ENCODE measurements at regions of chr7 and their contacts with region 1.

Region 1: GRCh38 chr7:100705753-100706671 is at the start of gene POP7:
- DNase-seq: peak; percentile 97 to 98
- ATAC-seq: peak; percentile 98
- H3K4me3 ChIP-seq: peak within 1 kb of the TSS; percentile 92 to 97 (median 96)
- H3K27ac ChIP-seq: peak within 1 kb of the TSS; percentile 92 to 98 (median 93)
- H3K4me1 ChIP-seq: peaks cover 14 to 17% of the 10 kb centered on the region in 2 donors
- H3K27me3 ChIP-seq: no peaks in the 10 kb centered on the region
- CTCF ChIP-seq: no peak
- POLR2A ChIP-seq: peak; percentile 58 to 60
- total RNA-seq, gene POP7: 39.8 to 76.3 (median 63.0) TPM

Region 2: DNA sequence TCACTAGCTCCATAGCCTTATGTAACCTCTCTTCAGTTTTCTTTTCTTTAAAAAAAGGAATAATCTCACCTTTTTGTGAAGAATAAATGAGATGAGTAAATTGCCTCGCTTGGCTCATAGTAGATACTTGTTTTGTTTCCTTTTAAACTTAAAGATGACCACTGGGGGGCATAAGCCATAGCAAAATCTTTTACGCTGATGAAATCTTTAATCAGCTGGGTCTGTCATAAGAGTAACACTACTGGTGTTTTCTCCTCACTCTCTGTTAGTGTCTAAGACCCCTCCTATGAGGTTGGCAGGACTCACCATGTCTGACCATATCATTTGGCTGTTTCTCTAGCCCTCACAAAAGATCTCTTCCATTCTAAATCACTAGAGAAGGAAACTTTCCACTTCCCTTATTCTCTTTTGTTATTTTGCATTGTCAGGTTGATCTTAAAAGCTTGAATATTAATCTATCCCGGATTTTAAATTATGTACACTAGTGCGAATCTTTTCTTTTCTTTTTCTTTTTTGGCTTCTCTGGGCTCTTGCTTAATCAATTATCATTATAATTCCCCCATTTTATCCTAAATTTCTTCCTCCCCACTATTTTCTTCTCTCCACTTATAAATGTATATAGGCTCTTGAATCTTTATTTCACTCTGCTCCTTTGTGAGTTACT is 515.8 kb before region 1 on chr7:
- in situ Hi-C with region 1: no loop called
- intact Hi-C with region 1: no loop called
- DNase-seq: no peak
- ATAC-seq: peak in 1 of 2 donors; percentile 30
- H3K4me3 ChIP-seq: no peak overlapping the region
- H3K27ac ChIP-seq: no peak overlapping the region
- H3K4me1 ChIP-seq: no peaks in the 10 kb centered on the region
- H3K27me3 ChIP-seq: no peaks in the 10 kb centered on the region
- CTCF ChIP-seq: peak in 3 of 5 experiments; percentile 22 to 33 (median 26)
- POLR2A ChIP-seq: no peak

Region 3: GRCh38 chr7:100478966-100479665 is 226.9 kb before region 1 on chr7 and contains the start of gene TSC22D4:
- in situ Hi-C with region 1: loop called in 1 of 4 experiments (anchors 25 kb)
- intact Hi-C with region 1: loop called (anchors 10 kb)
- DNase-seq: peak; percentile 95
- ATAC-seq: peak; percentile 97 to 98
- H3K4me3 ChIP-seq: peak within 1 kb of the TSS; percentile 96 to 100 (median 98)
- H3K27ac ChIP-seq: peak within 1 kb of the TSS; percentile 90 to 99 (median 94)
- H3K4me1 ChIP-seq: peaks cover 33 to 36% of the 10 kb centered on the region in 2 donors
- H3K27me3 ChIP-seq: no peaks in the 10 kb centered on the region
- CTCF ChIP-seq: no peak
- POLR2A ChIP-seq: peak; percentile 79 to 90
- total RNA-seq, gene TSC22D4: 14.3 to 25.5 (median 21.2) TPM

Region 4: DNA sequence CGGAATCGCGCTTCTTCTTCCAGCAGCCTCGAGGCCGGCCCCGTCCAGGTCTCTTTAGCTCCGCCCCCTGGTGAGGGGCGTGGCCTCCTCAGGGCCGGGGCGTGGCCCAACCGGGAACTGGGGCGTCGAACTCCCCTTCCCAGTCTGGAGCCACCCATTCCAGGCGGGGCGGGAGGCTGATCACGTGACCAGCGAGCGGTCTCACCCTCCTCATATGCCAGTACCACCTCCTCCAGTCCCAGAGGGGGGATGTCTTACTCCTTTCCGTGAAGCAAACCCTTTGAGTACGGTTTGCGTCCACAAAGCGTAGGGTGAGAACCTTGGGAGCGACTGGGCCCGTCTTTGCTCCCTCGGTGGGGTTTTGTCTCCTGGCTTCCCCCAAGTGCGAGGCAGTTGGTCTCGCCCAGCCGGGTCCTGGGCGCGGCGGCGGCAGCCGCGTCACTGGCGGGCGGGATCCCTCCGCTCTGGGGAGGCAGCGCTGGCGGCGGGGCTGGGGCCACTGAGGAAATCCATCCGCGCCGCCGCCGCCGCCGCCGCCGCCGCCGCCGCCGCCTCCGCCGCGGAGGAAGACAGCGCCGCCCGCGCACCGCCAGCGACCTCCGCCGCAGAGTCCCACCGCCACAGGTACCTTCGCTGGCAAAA is 32.6 kb before region 1 on chr7 and contains the start of gene GNB2:
- in situ Hi-C with region 1: no loop called
- intact Hi-C with region 1: loop called (anchors 1 kb)
- DNase-seq: peak; percentile 98 to 99
- ATAC-seq: peak; percentile 90
- H3K4me3 ChIP-seq: peak within 1 kb of the TSS; percentile 95 to 100 (median 97)
- H3K27ac ChIP-seq: peak within 1 kb of the TSS; percentile 96 to 100 (median 99)
- H3K4me1 ChIP-seq: peaks cover 0 to 8% of the 10 kb centered on the region in 2 donors
- H3K27me3 ChIP-seq: no peaks in the 10 kb centered on the region
- CTCF ChIP-seq: peak in 2 of 5 experiments; percentile 43 to 53
- POLR2A ChIP-seq: peak; percentile 83 to 87
- total RNA-seq, gene GNB2: 108 to 163 (median 129) TPM

Region 5: DNA sequence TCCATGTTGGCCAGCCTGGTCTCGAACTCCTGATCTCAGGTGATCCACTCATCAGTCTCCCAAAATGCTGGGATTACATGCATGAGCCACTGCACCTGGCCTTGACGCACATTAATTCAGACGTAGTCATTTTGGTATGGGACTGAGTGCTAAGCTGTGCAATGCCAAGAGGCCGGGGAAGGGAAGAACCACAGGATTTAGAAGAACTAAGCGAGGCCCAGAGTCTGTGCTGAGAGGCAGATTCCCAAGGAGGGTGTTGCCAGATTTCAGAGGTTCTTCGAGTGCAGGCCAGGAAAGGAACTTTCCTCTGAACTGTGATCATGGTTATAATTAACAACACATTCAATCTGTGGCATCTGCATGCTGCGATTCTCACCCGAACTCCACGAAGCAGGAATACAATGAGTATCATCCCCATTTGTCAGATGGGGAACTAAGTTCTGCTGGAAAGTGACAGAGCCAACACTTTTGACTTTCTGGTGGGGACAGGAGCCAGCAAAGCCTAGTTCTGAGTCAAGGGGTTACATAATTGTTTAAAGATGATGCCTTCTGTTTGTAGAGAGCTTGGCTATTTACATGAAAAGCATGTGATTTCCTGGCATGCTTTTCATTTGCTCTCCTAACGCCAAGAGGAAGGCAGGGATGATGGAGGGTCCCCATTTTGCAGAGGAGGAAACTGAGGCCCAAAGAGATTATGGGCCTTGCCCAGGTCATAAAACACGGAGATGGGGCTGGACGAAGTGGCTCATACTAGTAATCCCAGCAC is 21.2 kb after region 1 on chr7:
- in situ Hi-C with region 1: no loop called
- intact Hi-C with region 1: loop called (anchors 1 kb)
- DNase-seq: no peak
- ATAC-seq: no peak
- H3K4me3 ChIP-seq: no peak overlapping the region
- H3K27ac ChIP-seq: no peak overlapping the region
- H3K4me1 ChIP-seq: no peaks in the 10 kb centered on the region
- H3K27me3 ChIP-seq: peaks cover 0 to 7% (median 4%) of the 10 kb centered on the region in 3 donors
- CTCF ChIP-seq: no peak
- POLR2A ChIP-seq: no peak

Region 6: DNA sequence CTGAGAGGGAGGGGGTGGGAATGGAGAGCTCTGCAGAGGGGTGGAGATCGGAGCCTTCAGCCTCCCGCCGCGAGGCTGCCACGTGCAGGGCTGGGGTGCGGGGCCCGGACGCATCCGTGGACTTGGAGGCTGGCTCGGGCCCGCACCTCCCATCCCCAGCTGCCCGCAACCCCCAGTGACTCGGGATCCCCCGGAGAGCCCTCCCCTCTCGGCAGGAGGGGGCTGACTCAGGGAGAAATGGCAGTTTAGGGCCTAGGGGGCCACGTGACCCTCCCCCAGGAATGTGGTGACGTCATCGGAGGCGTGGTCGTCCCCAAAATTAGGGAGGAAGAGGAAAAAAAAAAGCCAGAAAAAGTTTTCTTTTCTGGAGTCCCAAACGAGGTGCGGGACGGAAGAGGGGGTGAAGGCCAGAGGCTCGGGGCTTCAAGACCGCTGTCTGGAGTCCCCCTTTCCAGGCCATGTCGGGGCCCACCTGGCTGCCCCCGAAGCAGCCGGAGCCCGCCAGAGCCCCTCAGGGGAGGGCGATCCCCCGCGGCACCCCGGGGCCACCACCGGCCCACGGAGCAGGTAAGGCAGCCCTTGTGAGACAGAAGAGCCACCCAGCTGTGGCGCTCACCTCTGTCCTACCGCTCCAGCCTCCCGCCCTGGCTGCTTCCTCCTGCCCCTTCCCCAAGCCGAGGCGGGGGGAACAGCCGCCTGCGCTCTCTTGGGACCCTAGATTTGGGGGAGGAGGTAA is 161.2 kb after region 1 on chr7 and contains the start of gene TRIP6:
- in situ Hi-C with region 1: loop called in 2 of 4 experiments (anchors 10 to 25 kb)
- intact Hi-C with region 1: no loop called
- DNase-seq: peak; percentile 72 to 76
- ATAC-seq: peak; percentile 63 to 77
- H3K4me3 ChIP-seq: peak within 1 kb of the TSS; percentile 57 to 66 (median 63)
- H3K27ac ChIP-seq: peak within 1 kb of the TSS; percentile 80 to 84 (median 83)
- H3K4me1 ChIP-seq: peaks cover 3 to 18% of the 10 kb centered on the region in 2 donors
- H3K27me3 ChIP-seq: peaks cover 3 to 7% (median 7%) of the 10 kb centered on the region in 3 donors
- CTCF ChIP-seq: no peak
- POLR2A ChIP-seq: peak in 1 of 2 donors; percentile 10
- total RNA-seq, gene TRIP6: 4.6 to 9.1 (median 7.3) TPM

Region 7: DNA sequence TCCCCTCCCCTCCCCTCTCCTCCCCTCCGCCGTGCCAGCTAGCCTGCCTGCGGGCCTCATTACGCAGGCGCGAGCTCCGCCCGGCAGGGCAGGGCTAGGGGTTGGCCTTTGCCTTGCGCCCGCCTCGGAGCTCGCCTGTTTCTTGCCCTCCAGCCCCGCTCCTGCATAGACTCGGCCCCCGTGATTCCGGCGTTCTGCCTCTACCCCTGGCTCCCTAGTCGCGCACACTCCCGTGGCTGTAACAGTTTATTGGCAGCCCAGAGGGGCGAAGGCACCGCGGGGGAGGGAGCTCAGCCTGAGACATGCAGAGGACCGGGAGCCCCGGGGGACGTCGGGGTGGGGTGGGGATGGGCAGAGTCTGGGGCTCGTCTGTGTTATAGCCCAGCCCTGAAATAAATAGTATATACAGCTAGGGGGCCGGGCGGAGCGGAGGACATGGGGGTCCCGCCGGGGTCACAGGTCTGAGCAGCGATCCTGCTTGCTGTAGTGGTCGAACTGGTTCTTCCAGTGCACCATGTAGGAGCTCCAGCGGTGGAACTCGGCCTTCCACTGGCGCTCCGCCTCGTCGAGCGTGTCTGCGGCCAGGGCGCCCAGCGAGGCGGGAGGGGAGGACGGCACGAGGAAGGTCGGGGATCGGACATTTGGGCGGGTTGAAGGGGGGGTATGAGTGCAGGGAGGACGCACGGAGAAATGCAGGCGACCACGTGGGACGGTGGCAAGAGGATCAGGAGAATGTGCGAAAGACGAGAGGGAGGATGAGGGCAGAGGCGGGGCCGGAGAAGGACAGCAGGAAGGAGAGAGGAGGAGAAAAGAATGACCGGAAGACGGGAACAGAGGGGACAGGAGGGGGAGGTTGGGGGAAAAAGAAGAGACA is 184.0 kb after region 1 on chr7:
- in situ Hi-C with region 1: no loop called
- intact Hi-C with region 1: loop called (anchors 5 kb)
- DNase-seq: peak; percentile 92
- ATAC-seq: peak; percentile 78 to 82
- H3K4me3 ChIP-seq: peak overlapping the region; percentile 69 to 89 (median 85)
- H3K27ac ChIP-seq: peak overlapping the region; percentile 95 to 99 (median 97)
- H3K4me1 ChIP-seq: peaks cover 28 to 49% of the 10 kb centered on the region in 2 donors
- H3K27me3 ChIP-seq: peaks cover 0 to under 1% (median 0%) of the 10 kb centered on the region in 3 donors
- CTCF ChIP-seq: peak in 1 of 5 experiments; percentile 10
- POLR2A ChIP-seq: peak; percentile 75 to 76

Measured in gastrocnemius medialis (tissue), 4 donors.